Sigmoid colon (tissue), 7 donors: ENCODE measurements at regions of chr2 and their contacts with region 1.

Region 1: GRCh38 chr2:32946314-32947075 is at the start of gene LTBP1:
- DNase-seq: peak; percentile 88
- H3K4me3 ChIP-seq: peak within 1 kb of the TSS; percentile 41 to 97 (median 80)
- H3K27ac ChIP-seq: peak within 1 kb of the TSS; percentile 89 to 95 (median 92)
- H3K4me1 ChIP-seq: peaks cover 0 to 13% (median 5%) of the 10 kb centered on the region in 4 donors
- H3K27me3 ChIP-seq: no peaks in the 10 kb centered on the region
- CTCF ChIP-seq: peak; percentile 20 to 66 (median 54)
- EP300 ChIP-seq: no peak
- POLR2A ChIP-seq: no peak
- total RNA-seq, gene LTBP1: 34.2 to 102 (median 55.2) TPM

Region 2: DNA sequence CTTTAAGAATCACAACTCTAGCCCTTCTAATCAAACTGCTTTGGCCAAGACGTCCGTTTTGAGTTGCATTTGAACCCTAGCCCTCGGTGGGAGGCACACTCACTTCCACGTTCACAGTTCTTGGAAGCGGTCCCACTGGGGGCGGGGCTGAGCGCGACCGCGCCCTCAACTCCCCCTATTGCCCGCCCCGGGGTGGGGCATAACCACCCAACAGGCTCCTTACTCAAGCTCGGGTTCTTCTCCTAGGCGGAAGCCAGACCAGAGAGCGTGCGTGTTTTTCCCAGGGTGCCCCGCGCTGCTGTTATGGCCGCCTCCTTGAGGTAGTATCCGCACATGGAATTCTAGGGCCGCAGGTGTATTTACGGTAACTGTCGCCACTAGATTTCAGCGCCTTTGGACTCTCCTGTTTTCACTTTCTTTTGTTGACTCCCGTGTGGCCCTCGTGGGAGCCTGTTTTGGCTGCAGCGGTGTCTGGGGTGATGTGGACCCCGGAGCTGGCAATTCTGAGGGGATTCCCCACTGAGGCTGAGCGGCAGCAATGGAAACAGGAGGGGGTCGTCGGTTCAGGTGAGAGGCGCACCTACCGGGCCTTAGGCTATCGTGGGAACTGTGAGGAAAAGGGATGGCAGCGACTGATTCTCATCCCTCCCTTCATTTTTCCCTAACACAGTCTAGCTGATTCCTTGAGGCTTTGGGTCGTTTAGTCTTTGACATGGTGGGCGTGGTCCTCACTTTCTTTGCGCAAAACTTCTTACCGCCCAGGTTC is 318.5 kb before region 1 on chr2 and contains the start of gene TTC27:
- intact Hi-C with region 1: loop called (anchors 10 kb)
- DNase-seq: peak; percentile 97
- H3K4me3 ChIP-seq: peak within 1 kb of the TSS; percentile 53 to 85 (median 68)
- H3K27ac ChIP-seq: peak within 1 kb of the TSS; percentile 71 to 85 (median 80)
- H3K4me1 ChIP-seq: peaks cover 0 to 29% (median 22%) of the 10 kb centered on the region in 4 donors
- H3K27me3 ChIP-seq: no peaks in the 10 kb centered on the region
- CTCF ChIP-seq: peak in 1 of 4 experiments; percentile 1
- EP300 ChIP-seq: peak in 1 of 4 donors; percentile 18
- POLR2A ChIP-seq: no peak
- total RNA-seq, gene TTC27: 14.1 to 22.5 (median 14.5) TPM

Region 3: GRCh38 chr2:32772638-32773447 is 173.7 kb before region 1 on chr2:
- intact Hi-C with region 1: loop called (anchors 5 kb)
- DNase-seq: no peak
- H3K4me3 ChIP-seq: no peak overlapping the region
- H3K27ac ChIP-seq: no peak overlapping the region
- H3K4me1 ChIP-seq: peaks cover 0 to 3% (median 0%) of the 10 kb centered on the region in 4 donors
- H3K27me3 ChIP-seq: no peaks in the 10 kb centered on the region
- CTCF ChIP-seq: peak in 3 of 4 experiments; percentile 53 to 66 (median 53)
- EP300 ChIP-seq: no peak
- POLR2A ChIP-seq: no peak

Region 4: GRCh38 chr2:33267756-33268155 is 321.3 kb after region 1 on chr2:
- intact Hi-C with region 1: loop called (anchors 5 kb)
- DNase-seq: no peak
- H3K4me3 ChIP-seq: no peak overlapping the region
- H3K27ac ChIP-seq: peak overlapping the region in 2 of 4 donors; percentile 17 to 40
- H3K4me1 ChIP-seq: peaks cover 0 to 34% (median 18%) of the 10 kb centered on the region in 4 donors
- H3K27me3 ChIP-seq: no peaks in the 10 kb centered on the region
- CTCF ChIP-seq: no peak
- EP300 ChIP-seq: no peak
- POLR2A ChIP-seq: no peak

Region 5: DNA sequence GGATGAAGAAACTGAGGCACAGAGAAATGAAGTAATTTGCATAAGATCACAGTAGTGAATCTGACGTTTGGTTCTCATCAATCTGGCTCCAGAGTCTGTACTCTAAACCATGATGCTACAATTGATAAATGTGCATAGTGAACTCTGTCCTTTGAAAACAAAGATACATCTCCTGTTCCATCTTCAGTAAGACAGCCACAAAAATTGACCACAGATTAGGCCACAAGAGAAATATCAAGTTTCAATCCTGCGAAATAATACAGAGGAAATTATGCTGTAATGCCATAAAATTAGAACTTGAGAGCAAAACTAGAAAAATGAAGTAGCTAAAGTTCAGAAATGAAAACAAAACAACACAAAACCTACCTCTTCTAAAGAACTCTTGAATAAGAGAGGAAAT is 624.2 kb after region 1 on chr2:
- intact Hi-C with region 1: no loop called
- DNase-seq: no peak
- H3K4me3 ChIP-seq: no peak overlapping the region
- H3K27ac ChIP-seq: no peak overlapping the region
- H3K4me1 ChIP-seq: no peaks in the 10 kb centered on the region
- H3K27me3 ChIP-seq: no peaks in the 10 kb centered on the region
- CTCF ChIP-seq: no peak
- EP300 ChIP-seq: no peak
- POLR2A ChIP-seq: no peak

Region 6: GRCh38 chr2:33583194-33583938 is 636.9 kb after region 1 on chr2:
- intact Hi-C with region 1: loop called (anchors 5 kb)
- DNase-seq: no peak
- H3K4me3 ChIP-seq: no peak overlapping the region
- H3K27ac ChIP-seq: peak overlapping the region in 1 of 4 donors; percentile 18
- H3K4me1 ChIP-seq: peaks cover 0 to 22% (median 10%) of the 10 kb centered on the region in 4 donors
- H3K27me3 ChIP-seq: no peaks in the 10 kb centered on the region
- CTCF ChIP-seq: peak; percentile 39 to 73 (median 62)
- EP300 ChIP-seq: no peak
- POLR2A ChIP-seq: no peak